Lower leg skin (tissue), 4 donors: ENCODE measurements at regions of chr2 and their contacts with region 1.

Region 1: DNA sequence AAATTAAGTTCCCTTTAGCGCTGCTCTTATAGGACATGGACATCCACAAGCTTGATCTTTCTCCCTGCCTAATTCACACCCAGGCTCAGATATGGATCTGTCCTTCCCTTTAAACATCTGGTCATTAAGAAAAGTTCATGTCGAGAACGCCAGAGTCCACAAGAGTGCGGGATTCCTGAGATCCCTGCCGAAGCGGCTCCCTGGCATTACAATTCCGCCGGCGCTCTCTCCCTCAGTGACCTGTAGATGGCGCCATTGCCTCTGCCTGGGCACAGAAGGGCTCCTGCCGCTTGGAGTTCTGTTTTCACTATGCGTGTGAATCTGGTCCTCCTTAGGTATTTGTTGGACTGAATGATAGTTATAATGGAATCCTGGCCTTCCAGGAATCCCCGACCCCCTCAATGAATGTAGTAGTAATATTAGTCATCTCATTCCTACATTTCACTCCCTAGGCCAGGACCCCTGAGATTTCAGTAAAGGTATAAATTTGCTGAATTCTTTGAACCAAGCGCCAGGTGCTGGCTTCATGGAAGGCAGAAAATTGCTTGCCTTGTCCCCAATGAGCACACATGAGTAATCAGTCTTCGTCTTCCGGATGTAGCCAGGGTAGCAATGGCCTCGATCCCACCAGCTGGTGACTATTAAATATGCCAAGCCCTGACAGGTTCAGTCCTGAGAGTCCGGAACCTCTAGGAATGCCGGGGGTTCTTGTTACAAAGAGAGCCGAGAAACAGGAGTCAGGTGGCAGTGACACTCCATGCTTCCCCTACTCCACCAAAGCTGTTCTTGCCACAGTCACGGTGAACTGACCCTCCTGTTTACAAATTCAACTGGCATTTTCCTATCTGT is 26.4 kb upstream of the CD207 start:
- DNase-seq: peak; percentile 66 to 96
- H3K4me3 ChIP-seq: no peak overlapping the region
- CTCF ChIP-seq: peak in 1 of 3 donors; percentile 38
- POLR2A ChIP-seq: no peak

Region 2: GRCh38 chr2:70919672-70920366 is 57.8 kb after region 1 on chr2:
- intact Hi-C with region 1: loop called (anchors 10 kb)
- DNase-seq: peak; percentile 72 to 95
- H3K4me3 ChIP-seq: no peak overlapping the region
- CTCF ChIP-seq: peak in 1 of 3 donors; percentile 58
- POLR2A ChIP-seq: no peak